OCI-LY7 (cell line): ENCODE measurements at regions of chr9 and their contacts with region 1.

Region 1: DNA sequence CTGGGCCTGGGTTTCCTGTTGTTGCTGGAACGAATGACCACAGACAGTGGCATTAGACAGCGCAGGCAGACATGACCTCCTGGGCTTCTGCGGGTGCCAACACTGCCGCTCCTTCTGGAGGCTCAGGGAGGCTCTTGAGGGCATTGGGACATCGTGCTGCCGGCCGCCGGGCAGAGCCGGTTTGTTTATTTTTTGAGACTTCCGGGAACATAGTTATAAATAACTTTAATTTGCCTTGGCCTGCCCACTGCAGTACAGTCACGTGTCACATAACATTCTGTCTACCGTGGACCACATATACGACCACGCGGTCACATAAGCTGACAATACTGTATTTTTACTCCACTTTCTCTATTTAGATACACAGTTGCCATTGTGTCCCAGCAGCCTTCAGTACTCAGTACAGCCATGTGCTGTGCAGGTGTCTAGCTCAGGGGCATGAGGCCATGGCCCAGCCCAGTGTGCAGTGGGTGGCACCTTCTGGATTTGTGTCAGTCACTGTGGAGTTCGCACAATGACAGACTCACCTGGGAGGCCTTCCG is 8.2 kb upstream of the TOR4A start:
- DNase-seq: peak; percentile 82
- H3K4me3 ChIP-seq: peak overlapping the region; percentile 65
- H3K27ac ChIP-seq: peak overlapping the region; percentile 90
- H3K4me1 ChIP-seq: peaks cover 61% of the 10 kb centered on the region
- CTCF ChIP-seq: no peak

Region 2: DNA sequence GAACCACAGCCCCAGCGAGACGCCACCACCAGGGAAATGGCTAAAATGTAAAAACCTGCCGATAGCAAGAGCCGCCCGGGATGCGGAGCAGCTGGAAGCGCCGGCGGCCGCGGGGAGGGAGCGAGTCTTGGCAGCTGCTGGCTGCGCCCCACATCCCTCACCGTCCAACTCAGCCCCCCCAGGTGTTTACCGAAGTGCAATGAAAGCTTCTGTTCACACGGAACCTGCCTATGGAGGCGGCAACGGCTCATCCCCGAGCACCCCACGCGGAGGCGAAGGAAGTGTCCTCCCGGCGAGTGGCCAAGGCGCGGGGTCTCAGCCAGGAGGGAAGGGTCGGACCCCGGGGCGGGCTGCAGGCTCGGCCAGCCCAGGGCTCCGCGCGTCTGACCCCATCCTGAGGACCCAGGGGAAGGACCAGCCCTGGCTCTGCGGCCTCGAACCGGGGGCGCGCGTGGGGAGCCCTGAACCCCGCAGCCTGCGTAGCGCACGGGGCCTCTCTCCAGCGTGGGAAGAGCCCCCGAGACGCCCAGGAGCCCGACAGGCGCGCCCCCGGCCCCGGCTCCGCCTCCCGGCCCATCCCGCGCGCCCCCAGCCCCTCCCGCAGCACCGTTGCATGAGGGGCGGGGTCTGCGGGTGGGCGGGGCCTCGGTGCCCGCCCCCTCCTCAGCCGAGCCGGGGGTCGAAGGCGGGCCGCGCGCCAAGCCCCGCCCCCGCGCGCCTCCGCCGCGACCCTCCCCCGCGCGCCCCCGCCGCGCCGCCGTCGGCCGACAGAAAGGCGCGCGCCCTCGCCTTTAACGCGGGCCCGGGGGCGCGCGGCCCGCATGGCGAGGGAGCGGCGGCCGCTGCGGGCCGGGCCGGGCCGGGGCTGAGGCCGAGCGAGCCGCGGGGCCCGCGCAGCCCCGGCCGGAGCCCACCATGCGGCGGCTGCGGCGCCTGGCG is 557.3 kb before region 1 on chr9 and contains the start of gene DIPK1B:
- CTCF ChIA-PET with region 1: no interaction called
- POLR2A ChIA-PET with region 1: no interaction called
- intact Hi-C with region 1: no loop called
- DNase-seq: peak; percentile 62
- H3K4me3 ChIP-seq: peak within 1 kb of the TSS; percentile 77
- H3K27ac ChIP-seq: no peak within 1 kb of the TSS
- H3K4me1 ChIP-seq: peaks cover 9% of the 10 kb centered on the region
- CTCF ChIP-seq: no peak
- total RNA-seq, gene DIPK1B: 13.3 and 13.9 TPM in 2 replicates

Region 3: GRCh38 chr9:137156567-137157375 is 112.5 kb before region 1 on chr9:
- CTCF ChIA-PET with region 1: no interaction called
- POLR2A ChIA-PET with region 1: no interaction called
- intact Hi-C with region 1: no loop called
- DNase-seq: peak; percentile 79
- H3K4me3 ChIP-seq: peak overlapping the region; percentile 20
- H3K27ac ChIP-seq: no peak overlapping the region
- H3K4me1 ChIP-seq: peaks cover 30% of the 10 kb centered on the region
- CTCF ChIP-seq: no peak

Region 4: DNA sequence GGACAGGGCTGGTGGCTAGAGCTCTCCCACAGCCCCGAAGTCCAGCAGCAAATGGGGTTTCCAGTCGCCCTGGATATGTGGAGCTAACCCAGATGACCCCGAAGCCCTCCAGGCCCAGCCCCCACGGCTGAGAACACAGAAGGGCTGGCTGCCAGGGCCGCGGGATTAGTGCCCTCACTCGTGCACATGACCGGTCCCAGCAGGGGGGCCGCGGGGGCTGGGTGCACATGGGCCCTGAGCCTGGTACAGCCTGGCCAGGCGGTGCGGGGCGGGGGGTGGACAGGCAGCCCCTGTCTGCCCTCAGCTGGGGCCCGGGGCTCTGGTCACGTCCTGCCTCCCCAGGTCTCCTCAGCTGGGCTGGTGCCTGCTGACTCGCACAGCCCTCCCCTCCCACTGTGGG is 74.9 kb before region 1 on chr9:
- CTCF ChIA-PET with region 1: no interaction called
- POLR2A ChIA-PET with region 1: no interaction called
- intact Hi-C with region 1: no loop called
- DNase-seq: no peak
- H3K4me3 ChIP-seq: no peak overlapping the region
- H3K27ac ChIP-seq: no peak overlapping the region
- H3K4me1 ChIP-seq: peaks cover 12% of the 10 kb centered on the region
- CTCF ChIP-seq: no peak

Region 5: DNA sequence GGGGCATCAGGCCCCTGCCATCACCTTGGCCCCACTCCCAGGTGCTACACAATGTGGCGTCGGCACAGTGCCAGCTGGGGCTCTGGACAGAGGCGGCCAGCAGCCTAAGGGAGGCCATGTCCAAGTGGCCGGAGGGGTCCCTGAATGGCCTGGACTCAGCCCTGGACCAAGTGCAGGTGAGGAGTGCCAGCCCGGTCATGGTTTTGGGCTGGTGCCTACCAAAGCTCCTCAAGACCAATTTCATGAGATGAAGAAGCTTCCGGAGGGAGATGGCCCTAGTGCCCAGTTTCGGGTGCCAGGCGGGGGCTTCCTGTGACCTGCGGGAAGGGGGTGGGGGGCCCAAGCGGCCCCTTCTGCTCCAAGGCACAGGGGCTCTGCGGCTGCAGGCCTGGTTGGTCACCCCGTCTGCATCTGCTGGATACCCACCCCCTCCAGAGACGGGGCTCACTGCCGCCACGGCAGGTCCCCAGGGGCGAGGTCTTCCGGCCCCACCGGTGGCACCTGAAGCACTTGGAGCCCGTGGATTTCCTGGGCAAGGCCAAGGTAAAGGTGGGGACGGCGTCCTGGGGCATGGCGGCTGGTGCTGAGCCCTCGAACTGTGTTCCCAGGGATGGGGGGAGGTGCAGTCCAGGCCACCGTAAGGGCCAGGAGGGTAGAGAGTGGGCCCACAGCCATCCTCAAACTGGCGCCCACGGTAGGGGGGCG is 159.7 kb after region 1 on chr9:
- CTCF ChIA-PET with region 1: interaction called, 13 read pairs
- POLR2A ChIA-PET with region 1: no interaction called
- intact Hi-C with region 1: no loop called
- DNase-seq: no peak
- H3K4me3 ChIP-seq: no peak overlapping the region
- H3K27ac ChIP-seq: no peak overlapping the region
- H3K4me1 ChIP-seq: peaks cover 18% of the 10 kb centered on the region
- CTCF ChIP-seq: no peak

Region 6: GRCh38 chr9:137605121-137606004 is 336.1 kb after region 1 on chr9 and contains the start of gene ARRDC1:
- CTCF ChIA-PET with region 1: no interaction called
- POLR2A ChIA-PET with region 1: no interaction called
- intact Hi-C with region 1: no loop called
- DNase-seq: peak; percentile 95
- H3K4me3 ChIP-seq: peak within 1 kb of the TSS; percentile 89
- H3K27ac ChIP-seq: peak within 1 kb of the TSS; percentile 35
- H3K4me1 ChIP-seq: peaks cover 32% of the 10 kb centered on the region
- CTCF ChIP-seq: no peak
- total RNA-seq, gene ARRDC1: 47.0 and 70.3 TPM in 2 replicates